HAP-1 (cell line): ENCODE measurements at regions of chr17 and their contacts with region 1.

Region 1: DNA sequence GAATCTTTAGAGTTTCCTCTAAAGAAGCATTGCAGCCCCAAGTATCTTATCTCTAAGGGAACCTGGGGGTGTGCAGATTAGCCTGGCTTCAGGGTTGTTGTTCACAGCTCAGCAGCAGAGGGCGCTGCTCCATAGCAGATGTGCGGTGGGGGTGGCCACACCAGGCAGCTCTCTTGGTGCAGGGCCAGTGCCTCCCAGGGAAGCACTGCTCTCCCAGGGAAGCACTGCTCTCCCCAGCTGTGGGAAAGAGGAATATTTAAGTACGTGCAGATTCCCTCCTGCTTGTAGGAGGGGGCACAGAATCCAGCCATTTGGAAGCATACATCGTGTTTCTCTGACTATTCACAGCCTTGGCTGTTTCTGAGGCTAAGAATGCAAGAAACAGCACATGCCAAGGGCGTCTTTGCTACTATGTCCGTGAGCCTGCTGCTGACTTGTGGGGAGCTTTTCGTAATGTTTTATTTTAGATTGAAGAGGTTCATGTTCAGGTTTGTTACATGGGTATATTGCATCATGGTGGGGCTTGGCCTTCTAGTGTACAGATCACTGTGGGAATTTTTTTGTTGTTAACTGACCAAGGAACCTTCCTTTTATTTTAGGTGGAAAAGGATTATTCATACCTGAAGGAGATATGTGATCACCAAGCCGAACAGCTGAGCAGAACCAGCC is 217.8 kb downstream of the SPECC1 start:
- DNase-seq: peak; percentile 67 to 88
- H3K4me3 ChIP-seq: no peak overlapping the region
- H3K4me1 ChIP-seq: peaks cover 22% of the 10 kb centered on the region
- H3K27me3 ChIP-seq: no peaks in the 10 kb centered on the region

Region 2: DNA sequence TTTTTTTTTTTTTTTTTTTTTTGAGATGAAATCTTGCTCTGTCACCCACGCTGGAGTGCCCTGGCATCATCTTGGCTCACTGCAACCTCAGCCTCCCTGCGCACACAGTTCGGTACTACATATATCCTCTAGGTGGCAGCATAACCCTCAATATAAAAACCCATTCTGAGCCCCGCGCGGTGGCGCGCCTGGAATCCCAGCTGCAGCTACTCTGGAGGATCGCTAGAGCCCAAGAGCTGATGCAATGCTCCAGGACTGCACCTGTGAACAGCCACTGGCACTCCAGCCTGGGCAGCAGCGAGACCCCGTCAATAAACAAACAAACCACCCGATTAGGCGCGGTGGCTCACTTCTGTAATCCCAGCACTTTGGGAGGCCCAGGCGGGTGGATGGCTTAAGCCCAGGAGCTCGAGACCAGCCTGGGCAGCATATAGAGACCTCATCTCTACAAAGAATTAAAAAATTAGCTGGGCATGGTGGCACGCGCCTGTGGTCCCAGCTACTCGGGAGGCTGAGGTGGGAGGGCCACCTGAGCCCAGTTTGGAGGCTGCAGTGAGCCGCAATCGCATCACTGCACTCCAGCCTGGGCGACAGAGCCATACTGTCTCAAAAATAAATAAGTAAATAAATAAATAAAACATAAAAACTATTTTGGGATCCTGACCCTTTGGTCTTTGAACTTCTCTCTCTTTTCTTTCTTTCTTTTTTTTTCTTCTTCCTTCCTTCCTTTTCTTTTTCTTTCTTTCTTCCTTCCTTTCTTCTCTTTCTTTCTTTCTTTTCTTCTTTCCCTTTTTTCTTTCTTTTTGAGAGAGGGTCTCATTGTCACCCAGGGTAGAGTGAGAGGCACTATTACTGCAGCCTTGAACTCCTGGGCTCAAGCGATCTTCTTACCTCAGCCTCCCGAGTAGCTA is 233.9 kb before region 1 on chr17:
- in situ Hi-C with region 1: loop called (anchors 10 kb)
- DNase-seq: peak; percentile 91 to 93
- H3K4me3 ChIP-seq: peak overlapping the region; percentile 15; the same call in 1 of the 2 replicates
- H3K4me1 ChIP-seq: peaks cover 5% of the 10 kb centered on the region
- H3K27me3 ChIP-seq: no peaks in the 10 kb centered on the region

Region 3: DNA sequence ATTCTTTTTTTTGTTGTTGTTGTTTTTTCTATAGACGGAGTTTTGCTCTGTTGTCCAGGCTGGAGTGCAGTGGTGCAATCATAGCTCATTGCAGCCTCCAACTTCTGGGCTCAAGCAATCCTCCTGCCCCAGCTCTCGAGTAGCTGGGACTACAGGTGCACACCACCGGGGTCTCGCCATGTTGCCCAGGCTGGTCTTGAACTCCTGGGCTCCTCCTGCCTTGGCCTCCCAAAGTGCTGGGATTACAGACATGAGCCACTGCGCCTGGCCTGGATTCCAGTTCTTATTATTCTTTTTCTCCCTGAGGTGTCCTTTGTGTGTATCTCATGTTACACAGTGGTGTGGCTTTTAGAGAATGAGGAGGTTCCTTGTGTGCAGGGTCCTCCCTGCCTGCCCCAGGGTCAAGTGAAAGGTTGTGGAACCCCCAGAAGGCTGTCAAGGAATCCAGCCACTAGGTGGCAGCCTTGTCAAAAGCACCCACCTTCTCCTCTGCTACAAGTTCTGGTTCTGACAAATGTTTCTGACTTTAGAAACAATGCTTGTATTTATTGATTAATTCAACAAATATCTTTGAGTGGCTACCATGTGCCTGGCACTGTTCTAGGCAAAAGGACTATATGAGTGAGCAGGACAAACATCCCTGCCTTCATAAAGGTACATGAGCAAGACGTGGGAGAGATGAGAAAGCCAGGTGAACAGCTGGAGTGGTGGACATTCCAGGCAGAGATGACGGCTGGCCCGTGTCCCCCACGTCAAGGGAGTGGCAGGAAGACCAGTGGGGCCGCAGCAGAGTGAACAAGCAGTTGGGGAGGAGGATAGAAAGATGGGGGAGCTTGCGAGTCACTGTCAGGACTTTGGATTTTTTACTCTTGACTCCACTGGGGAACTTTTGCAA is 105.3 kb before region 1 on chr17:
- in situ Hi-C with region 1: loop called (anchors 10 kb)
- DNase-seq: peak; percentile 11 to 79
- H3K4me3 ChIP-seq: no peak overlapping the region
- H3K4me1 ChIP-seq: no peaks in the 10 kb centered on the region
- H3K27me3 ChIP-seq: no peaks in the 10 kb centered on the region

Region 4: DNA sequence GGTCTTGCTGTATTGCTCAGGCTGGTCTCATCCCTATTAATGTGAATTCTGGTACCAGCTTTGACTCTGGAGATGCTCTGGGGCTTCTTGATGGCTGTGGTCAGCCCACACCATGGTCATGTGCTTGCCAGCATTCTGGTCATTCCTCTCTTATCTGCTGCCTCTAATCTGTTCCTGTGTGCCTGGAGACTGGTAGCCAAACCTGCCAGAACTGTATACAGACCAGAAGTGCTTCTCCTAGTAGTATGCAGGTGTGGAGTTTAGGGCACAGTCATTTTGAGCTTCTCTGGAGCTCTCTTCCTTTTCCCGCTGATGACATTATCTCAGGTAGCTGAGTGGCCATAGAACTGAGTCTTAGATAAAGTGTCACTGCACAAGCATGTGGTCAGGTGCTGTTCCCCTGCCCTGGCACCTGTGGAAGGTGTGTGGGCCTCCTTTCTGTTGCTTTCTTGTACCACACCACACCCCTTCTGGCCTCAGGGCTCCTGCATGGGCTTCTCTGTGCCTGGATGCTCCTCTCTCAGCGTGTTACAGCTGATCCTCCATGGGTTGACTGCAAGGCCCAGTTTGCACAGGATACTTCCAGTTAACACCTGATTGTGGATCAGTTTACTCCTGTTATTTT is 55.1 kb before region 1 on chr17:
- in situ Hi-C with region 1: no loop called
- DNase-seq: no peak
- H3K4me3 ChIP-seq: no peak overlapping the region
- H3K4me1 ChIP-seq: no peaks in the 10 kb centered on the region
- H3K27me3 ChIP-seq: no peaks in the 10 kb centered on the region

Region 5: GRCh38 chr17:20315821-20316220 is 88.9 kb after region 1 on chr17:
- in situ Hi-C with region 1: loop called (anchors 10 kb)
- DNase-seq: no peak
- H3K4me3 ChIP-seq: no peak overlapping the region
- H3K4me1 ChIP-seq: no peaks in the 10 kb centered on the region
- H3K27me3 ChIP-seq: no peaks in the 10 kb centered on the region